ENCODE measurements at regions of chr14 and their contacts with region 1.

Region 1: DNA sequence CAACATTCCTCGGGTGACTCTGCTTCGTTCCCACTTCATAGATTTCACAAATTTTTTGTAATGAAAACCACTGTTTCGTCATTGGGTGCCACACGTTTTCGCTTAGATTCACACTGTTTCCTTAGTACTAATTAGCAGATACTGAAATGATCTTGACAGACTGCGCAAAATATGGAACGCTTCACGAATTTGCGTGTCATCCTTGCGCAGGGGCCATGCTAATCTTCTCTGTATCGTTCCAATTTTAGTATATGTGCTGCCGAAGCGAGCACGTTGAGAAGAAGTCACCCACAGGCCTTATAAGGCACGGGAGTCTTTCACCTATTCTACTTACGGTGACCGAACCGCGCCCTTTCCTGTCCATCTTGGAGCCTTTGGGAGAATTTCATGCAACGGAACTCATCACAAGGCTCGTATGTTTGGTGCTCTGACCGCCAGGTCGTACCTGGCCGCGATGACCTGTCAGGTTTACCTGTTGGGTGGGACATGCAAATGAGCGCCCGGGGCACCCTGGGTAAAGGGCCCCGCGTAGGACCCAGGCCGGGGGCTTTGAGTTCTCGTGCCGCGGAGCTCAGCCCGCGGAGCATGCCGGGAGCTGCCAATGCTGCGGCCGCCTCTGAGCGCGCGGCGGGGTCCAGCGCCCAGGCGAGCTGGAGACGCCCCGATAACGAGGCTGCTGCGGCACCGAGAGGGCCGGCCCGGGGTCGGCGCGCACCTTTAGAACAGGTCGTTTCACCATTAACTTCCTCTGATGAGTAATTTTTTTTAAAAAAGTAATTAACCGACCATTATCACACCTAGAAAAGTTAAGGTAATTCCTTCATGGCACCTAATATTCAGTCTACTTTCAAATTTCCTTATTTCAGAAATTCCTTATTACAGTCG is at the start of gene RNU6-8:
- DNase-seq: peak; percentile 79 to 96 (median 93)
- ATAC-seq: peak; percentile 91
- H3K4me3 ChIP-seq: peak within 1 kb of the TSS; percentile 85
- H3K4me3 Mint-ChIP-seq: peak within 1 kb of the TSS; percentile 91 to 98 (median 94)
- H3K27ac ChIP-seq: peak within 1 kb of the TSS; percentile 92
- H3K27ac Mint-ChIP-seq: peak within 1 kb of the TSS; percentile 96 to 100 (median 100)
- H3K4me1 ChIP-seq: peaks cover 0 to 9% of the 10 kb centered on the region in 2 donors
- H3K4me1 Mint-ChIP-seq: peaks cover 2 to 46% (median 21%) of the 10 kb centered on the region in 7 donors
- H3K27me3 ChIP-seq: no peaks in the 10 kb centered on the region
- H3K27me3 Mint-ChIP-seq: peaks cover 0 to 30% (median 0%) of the 10 kb centered on the region in 5 donors
- total RNA-seq, gene RNU6-8: not detected

Region 2: GRCh38 chr14:30558675-30559555 is 1644.3 kb before region 1 on chr14 and contains the start of gene G2E3:
- CTCF ChIA-PET with region 1: no interaction called
- POLR2A ChIA-PET with region 1: no interaction called
- intact Hi-C with region 1: loop called (anchors 1 to 2 kb)
- DNase-seq: peak; percentile 75 to 91 (median 85)
- ATAC-seq: peak; percentile 100
- H3K4me3 ChIP-seq: peak within 1 kb of the TSS; percentile 76
- H3K4me3 Mint-ChIP-seq: peak within 1 kb of the TSS; percentile 97 to 100 (median 99)
- H3K27ac ChIP-seq: peak within 1 kb of the TSS; percentile 77
- H3K27ac Mint-ChIP-seq: peak within 1 kb of the TSS; percentile 93 to 100 (median 98)
- H3K4me1 ChIP-seq: peaks cover 5 to 12% of the 10 kb centered on the region in 2 donors
- H3K4me1 Mint-ChIP-seq: peaks cover 24 to 43% (median 28%) of the 10 kb centered on the region in 7 donors
- H3K27me3 ChIP-seq: no peaks in the 10 kb centered on the region
- H3K27me3 Mint-ChIP-seq: peaks cover 0 to 4% (median 0%) of the 10 kb centered on the region in 5 donors
- total RNA-seq, gene G2E3: 25.0 to 29.7 (median 28.6) TPM

Region 3: GRCh38 chr14:31026395-31027118 is 1176.7 kb before region 1 on chr14:
- CTCF ChIA-PET with region 1: no interaction called
- POLR2A ChIA-PET with region 1: no interaction called
- intact Hi-C with region 1: loop called (anchors 1 to 2 kb)
- DNase-seq: peak; percentile 74 to 93 (median 80)
- ATAC-seq: peak; percentile 97
- H3K4me3 ChIP-seq: peak overlapping the region; percentile 84
- H3K4me3 Mint-ChIP-seq: peak overlapping the region; percentile 86 to 100 (median 96)
- H3K27ac ChIP-seq: peak overlapping the region; percentile 91
- H3K27ac Mint-ChIP-seq: peak overlapping the region; percentile 89 to 98 (median 96)
- H3K4me1 ChIP-seq: no peaks in the 10 kb centered on the region
- H3K4me1 Mint-ChIP-seq: peaks cover 38 to 62% (median 49%) of the 10 kb centered on the region in 7 donors
- H3K27me3 ChIP-seq: no peaks in the 10 kb centered on the region
- H3K27me3 Mint-ChIP-seq: no peaks in the 10 kb centered on the region

Region 4: DNA sequence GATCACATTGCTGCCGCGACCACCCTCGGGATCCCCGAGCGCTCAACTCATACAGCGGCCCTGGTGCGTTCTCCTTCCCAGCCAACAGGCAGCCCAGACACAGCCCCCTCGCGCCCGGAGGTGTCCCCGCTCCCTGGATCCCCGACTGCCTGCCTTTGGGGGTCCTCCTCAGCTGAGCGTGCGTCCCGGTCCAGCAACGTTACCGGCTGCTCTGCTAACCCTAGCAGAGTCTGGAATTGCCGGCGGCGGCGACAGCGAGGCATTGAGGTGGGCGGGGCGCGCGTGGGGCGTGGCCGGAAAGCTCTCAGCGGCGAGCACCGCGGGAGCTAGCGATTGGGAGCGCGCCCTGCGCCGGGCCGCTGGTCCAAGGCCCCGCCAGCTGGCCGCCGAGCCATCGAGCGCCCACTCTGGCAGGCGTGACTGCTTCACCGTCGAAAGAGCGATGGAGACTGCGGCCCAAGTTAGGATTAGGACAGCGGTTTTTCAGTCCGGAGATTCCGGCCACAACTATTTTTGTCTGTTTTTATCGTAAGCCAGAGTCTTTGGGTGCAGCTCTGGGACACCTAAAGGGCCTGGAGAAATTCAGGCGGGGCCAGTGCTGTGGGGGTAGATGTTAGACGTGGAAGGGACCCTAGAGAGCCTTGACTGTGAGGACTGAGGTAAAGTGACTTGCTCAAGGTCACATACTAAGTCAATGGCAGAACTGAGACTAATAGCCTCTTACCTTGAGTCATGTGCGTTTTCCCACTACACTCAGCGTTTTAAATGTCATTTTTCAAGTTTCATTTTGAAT is 782.7 kb before region 1 on chr14 and contains the start of gene HEATR5A:
- CTCF ChIA-PET with region 1: no interaction called
- POLR2A ChIA-PET with region 1: interaction called, 8 read pairs
- intact Hi-C with region 1: loop called in 1 of 2 experiments (anchors 1 kb)
- DNase-seq: peak; percentile 84 to 93 (median 90)
- ATAC-seq: peak; percentile 99
- H3K4me3 ChIP-seq: peak within 1 kb of the TSS; percentile 99
- H3K4me3 Mint-ChIP-seq: peak within 1 kb of the TSS; percentile 94 to 99 (median 98)
- H3K27ac ChIP-seq: peak within 1 kb of the TSS; percentile 83
- H3K27ac Mint-ChIP-seq: peak within 1 kb of the TSS; percentile 82 to 97 (median 92)
- H3K4me1 ChIP-seq: peaks cover 6 to 8% of the 10 kb centered on the region in 2 donors
- H3K4me1 Mint-ChIP-seq: peaks cover 20 to 35% (median 25%) of the 10 kb centered on the region in 7 donors
- H3K27me3 ChIP-seq: no peaks in the 10 kb centered on the region
- H3K27me3 Mint-ChIP-seq: peaks cover 0 to 7% (median 0%) of the 10 kb centered on the region in 5 donors
- total RNA-seq, gene HEATR5A: 7.7 to 14.4 (median 13.2) TPM

Region 5: GRCh38 chr14:31561155-31561846 is 641.9 kb before region 1 on chr14 and contains the start of gene NUBPL:
- CTCF ChIA-PET with region 1: no interaction called
- POLR2A ChIA-PET with region 1: interaction called, 4 read pairs
- intact Hi-C with region 1: loop called (anchors 1 kb)
- DNase-seq: peak; percentile 96 to 98 (median 97)
- ATAC-seq: peak; percentile 95
- H3K4me3 ChIP-seq: peak within 1 kb of the TSS; percentile 90
- H3K4me3 Mint-ChIP-seq: peak within 1 kb of the TSS; percentile 88 to 98 (median 96)
- H3K27ac ChIP-seq: peak within 1 kb of the TSS; percentile 81
- H3K27ac Mint-ChIP-seq: peak within 1 kb of the TSS; percentile 95 to 100 (median 99)
- H3K4me1 ChIP-seq: peaks cover 0 to 5% of the 10 kb centered on the region in 2 donors
- H3K4me1 Mint-ChIP-seq: peaks cover 24 to 44% (median 38%) of the 10 kb centered on the region in 7 donors
- H3K27me3 ChIP-seq: no peaks in the 10 kb centered on the region
- H3K27me3 Mint-ChIP-seq: peaks cover 0 to 11% (median 5%) of the 10 kb centered on the region in 5 donors
- total RNA-seq, gene NUBPL: 6.1 to 11.7 (median 8.3) TPM

Region 6: DNA sequence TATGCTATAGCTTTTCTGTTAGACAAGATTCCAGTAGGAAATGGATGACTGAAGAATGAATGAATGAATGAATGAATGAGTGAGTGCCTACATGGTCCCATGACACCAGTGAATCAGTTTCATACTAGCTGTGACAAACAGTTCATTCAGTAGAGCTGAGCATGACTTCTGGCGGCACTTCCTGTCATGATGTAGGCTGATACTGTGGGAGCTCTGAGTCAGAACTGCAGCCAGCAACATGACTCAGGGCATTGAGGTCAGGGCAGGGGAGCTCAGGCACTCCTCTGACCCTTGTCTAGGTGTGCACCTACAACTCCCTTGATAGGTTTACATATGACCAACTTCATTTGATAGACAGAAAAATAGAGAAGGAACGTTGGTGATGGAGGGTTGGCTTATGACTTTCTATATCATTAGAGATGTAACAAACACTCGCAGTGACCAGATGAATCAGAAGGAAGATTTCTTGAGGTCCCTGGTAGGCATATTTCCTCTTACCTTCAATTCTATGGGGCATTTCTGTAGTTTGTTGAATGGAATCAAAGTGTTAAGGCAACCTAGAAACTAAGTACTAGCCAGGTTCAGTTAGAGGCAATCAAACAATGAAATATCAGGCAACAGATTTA is 265.4 kb before region 1 on chr14:
- CTCF ChIA-PET with region 1: no interaction called
- POLR2A ChIA-PET with region 1: interaction called, 4 read pairs
- intact Hi-C with region 1: loop called in 1 of 2 experiments (anchors 1 kb)
- DNase-seq: peak in 3 of 9 donors; percentile 10 to 66 (median 27)
- ATAC-seq: peak; percentile 92
- H3K4me3 ChIP-seq: no peak overlapping the region
- H3K4me3 Mint-ChIP-seq: no peak overlapping the region
- H3K27ac ChIP-seq: no peak overlapping the region
- H3K27ac Mint-ChIP-seq: peak overlapping the region in 4 of 9 donors; percentile 40 to 65 (median 54)
- H3K4me1 ChIP-seq: no peaks in the 10 kb centered on the region
- H3K4me1 Mint-ChIP-seq: peaks cover 4 to 29% (median 10%) of the 10 kb centered on the region in 7 donors
- H3K27me3 ChIP-seq: no peaks in the 10 kb centered on the region
- H3K27me3 Mint-ChIP-seq: no peaks in the 10 kb centered on the region

Region 7: DNA sequence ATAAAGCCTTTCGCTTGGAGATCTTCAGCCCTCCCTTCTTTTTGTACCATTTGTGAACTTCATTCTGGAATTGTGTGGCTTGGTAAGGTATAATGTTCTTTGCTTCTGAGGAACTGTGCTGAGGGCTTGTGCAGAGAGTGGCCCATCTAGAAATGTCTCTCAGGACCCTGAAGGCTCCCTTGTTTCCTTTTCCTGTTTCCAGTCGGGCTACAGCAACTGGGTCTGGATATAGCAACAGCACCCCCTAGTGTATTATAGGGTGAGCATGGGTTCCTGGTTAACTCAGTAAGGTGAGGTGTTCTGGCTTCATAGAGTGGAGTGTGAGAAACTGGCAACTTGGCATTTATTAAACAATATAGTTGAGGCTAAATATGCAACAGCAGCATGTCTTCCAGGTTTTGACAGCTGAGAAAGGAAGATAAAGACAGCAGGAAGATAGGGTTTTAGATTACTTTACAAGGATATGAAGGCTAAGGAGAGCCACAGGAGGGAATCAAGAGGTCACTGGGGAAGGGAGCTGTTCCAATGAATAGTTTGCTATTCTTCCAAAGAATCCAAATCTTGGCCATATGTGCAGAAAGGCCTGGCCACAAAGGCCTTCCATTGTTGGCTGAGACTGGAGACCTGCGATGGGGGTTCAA is 48.9 kb after region 1 on chr14:
- CTCF ChIA-PET with region 1: interaction called, 4 read pairs
- POLR2A ChIA-PET with region 1: no interaction called
- intact Hi-C with region 1: loop called (anchors 1 kb)
- DNase-seq: peak in 8 of 9 donors; percentile 27 to 77 (median 69)
- ATAC-seq: peak; percentile 93
- H3K4me3 ChIP-seq: no peak overlapping the region
- H3K4me3 Mint-ChIP-seq: no peak overlapping the region
- H3K27ac ChIP-seq: no peak overlapping the region
- H3K27ac Mint-ChIP-seq: no peak overlapping the region
- H3K4me1 ChIP-seq: no peaks in the 10 kb centered on the region
- H3K4me1 Mint-ChIP-seq: no peaks in the 10 kb centered on the region
- H3K27me3 ChIP-seq: no peaks in the 10 kb centered on the region
- H3K27me3 Mint-ChIP-seq: no peaks in the 10 kb centered on the region

Region 8: DNA sequence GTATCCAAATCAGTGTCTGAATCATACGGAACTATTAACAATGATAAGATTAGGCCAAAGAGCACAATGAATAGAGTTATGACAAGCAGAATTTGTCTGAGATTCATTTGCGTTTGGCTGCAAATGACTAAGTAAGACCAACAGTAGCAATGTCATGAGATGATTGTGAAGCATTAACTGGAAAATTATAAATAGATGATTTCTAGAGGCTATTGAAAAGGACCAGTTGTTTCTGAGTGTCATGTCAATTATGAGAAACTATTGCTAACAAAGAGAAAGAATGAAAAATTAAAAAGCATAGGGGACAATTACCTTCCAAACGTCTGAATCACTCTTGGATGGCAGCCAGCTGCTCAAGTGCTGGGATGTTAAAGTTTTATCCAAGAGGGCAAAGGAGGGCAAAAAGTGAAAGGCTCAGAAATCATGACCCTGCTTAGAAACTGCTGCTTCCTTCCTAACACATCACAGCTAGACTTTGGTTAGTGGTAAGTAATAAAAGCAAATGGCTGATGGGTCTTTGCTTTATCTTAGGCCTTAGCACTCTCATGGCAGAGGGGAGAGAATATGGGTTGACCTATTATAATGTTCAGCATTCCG is 214.8 kb after region 1 on chr14:
- CTCF ChIA-PET with region 1: no interaction called
- POLR2A ChIA-PET with region 1: no interaction called
- intact Hi-C with region 1: no loop called
- DNase-seq: no peak
- ATAC-seq: no peak
- H3K4me3 ChIP-seq: no peak overlapping the region
- H3K4me3 Mint-ChIP-seq: no peak overlapping the region
- H3K27ac ChIP-seq: no peak overlapping the region
- H3K27ac Mint-ChIP-seq: no peak overlapping the region
- H3K4me1 ChIP-seq: no peaks in the 10 kb centered on the region
- H3K4me1 Mint-ChIP-seq: no peaks in the 10 kb centered on the region
- H3K27me3 ChIP-seq: no peaks in the 10 kb centered on the region
- H3K27me3 Mint-ChIP-seq: peaks cover 0 to 5% (median 0%) of the 10 kb centered on the region in 5 donors